ENCODE measurements at regions of chrX and their contacts with region 1.

Region 1: DNA sequence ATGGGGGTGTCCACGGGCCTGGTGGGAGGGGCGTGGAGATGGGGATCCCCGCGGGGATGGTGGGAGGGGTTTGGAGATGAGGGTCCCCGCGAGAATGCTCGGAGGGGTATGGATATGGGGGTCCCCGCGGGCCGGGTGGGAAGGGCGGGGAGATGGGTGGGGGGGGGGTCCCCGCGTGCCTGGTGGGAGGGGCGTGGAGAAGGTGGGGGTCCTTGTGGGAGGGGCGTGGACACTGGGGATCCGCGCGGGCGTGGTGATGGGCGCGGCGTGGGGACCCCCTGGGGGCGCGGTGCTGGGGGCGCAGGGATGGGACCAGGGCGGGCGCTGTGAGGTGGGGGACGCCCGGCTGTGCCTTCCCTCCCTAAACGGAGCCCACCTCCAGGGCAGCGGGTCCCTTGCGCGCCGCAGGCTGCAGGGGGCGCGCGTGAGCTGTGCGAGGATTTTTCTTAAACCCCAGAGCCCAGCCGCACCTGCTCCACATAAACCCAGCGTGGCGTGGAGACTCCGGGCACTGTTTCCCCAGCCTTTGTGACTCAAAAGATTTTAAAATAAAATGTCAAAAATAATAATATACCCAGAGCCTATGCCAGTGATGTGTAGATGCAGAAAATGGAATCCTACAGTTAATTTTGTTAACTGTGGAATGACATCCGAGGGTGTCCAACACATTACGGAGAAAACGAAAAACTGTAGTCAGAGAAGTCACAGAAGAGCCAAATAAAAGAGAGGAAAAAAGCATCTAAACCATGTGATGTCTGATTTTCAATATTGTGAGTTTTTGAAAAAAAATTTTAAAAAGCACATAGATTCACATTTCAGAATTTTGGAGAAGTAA is 1.5 kb upstream of the ASMTL start:
- DNase-seq: peak; percentile 95
- ATAC-seq: peak; percentile 43
- H3K4me3 Mint-ChIP-seq: peak overlapping the region; percentile 47
- H3K27ac Mint-ChIP-seq: peak overlapping the region; percentile 48
- H3K4me1 Mint-ChIP-seq: peaks cover 21% of the 10 kb centered on the region
- H3K27me3 Mint-ChIP-seq: no peaks in the 10 kb centered on the region
- CTCF ChIP-seq: peak; percentile 96

Region 2: DNA sequence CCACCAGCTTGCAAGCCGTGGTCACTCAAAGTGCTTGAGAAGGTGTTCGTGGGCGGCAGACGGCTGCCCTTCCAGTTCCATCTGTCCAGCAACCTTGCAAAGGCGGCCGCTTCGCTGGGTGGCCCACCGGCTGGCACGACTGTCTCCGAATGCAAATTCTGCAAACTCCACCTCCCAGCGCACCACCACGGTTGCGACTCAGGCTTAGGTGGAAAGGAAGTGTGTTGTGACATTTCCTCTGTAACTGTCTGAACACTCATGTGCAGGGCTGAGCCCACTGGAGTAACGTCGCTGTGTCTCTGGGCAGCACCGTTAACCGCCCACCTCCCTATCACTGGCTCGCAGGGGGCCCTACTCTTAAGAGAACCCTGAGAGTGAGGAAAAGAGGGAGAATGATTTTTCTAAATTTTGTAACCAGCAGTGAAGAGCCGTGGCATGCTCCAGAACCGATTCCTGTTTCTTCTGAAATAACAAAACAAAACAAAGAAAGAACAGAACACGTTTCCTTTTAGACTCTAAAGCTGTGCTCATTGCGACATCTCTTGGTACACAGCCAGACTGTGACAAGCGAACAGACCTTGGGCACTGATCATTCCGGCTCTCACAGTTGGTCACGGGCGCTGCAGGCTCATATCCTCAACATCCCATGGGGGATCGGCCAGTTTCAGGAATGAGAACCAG is 83.0 kb after region 1 on chrX and contains the start of gene P2RY8:
- CTCF ChIA-PET with region 1: no interaction called
- POLR2A ChIA-PET with region 1: no interaction called
- intact Hi-C with region 1: loop called (anchors 2 kb)
- DNase-seq: peak; percentile 90
- ATAC-seq: peak; percentile 76
- H3K4me3 Mint-ChIP-seq: peak within 1 kb of the TSS; percentile 96
- H3K27ac Mint-ChIP-seq: peak within 1 kb of the TSS; percentile 99
- H3K4me1 Mint-ChIP-seq: peaks cover 10% of the 10 kb centered on the region
- H3K27me3 Mint-ChIP-seq: no peaks in the 10 kb centered on the region
- CTCF ChIP-seq: no peak
- total RNA-seq, gene P2RY8: 27.5 to 28.3 TPM

Region 3: DNA sequence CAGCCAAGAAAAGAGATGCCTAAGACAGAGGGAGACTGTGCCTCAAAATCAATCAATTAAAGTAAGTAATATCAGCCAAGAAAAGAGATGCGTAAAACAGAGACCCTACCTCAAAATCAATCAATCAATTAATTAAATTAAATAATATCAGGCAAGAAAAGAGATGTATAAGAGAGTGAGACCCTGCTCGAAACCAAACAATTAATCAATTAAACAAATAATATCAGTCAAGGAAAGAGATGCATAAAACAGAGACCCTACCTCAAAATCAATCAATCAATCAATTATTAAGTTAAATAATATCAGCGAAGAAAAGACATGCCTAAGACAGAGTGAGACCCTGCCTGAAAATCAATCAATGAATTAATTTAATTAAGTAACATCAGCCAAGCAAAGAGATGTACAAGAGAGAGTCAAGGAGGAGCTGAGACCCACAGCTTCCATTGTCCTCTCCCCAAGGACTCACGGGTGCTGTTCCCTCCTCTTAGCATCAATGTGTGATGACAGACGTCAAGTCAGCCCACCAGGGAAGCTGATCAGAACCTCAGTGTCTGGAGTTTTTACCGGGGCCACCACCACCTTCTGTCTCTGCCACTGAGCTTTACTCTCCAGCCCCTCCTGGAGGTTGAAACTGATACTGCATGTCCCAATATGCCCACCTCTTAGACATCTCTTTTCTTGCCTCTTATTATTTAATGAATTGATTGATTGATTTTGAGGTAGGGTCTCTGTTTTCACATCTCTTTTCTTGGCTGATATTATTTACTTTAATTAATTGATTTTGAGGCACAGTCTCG is 126.8 kb after region 1 on chrX:
- CTCF ChIA-PET with region 1: no interaction called
- POLR2A ChIA-PET with region 1: no interaction called
- intact Hi-C with region 1: loop called (anchors 5 kb)
- DNase-seq: peak; percentile 92
- ATAC-seq: peak; percentile 93
- H3K4me3 Mint-ChIP-seq: no peak overlapping the region
- H3K27ac Mint-ChIP-seq: no peak overlapping the region
- H3K4me1 Mint-ChIP-seq: peaks cover 16% of the 10 kb centered on the region
- H3K27me3 Mint-ChIP-seq: no peaks in the 10 kb centered on the region
- CTCF ChIP-seq: peak; percentile 92

Region 4: GRCh38 chrX:1657367-1658070 is 203.4 kb after region 1 on chrX:
- CTCF ChIA-PET with region 1: no interaction called
- POLR2A ChIA-PET with region 1: no interaction called
- intact Hi-C with region 1: loop called (anchors 5 kb)
- DNase-seq: peak; percentile 84
- ATAC-seq: peak; percentile 51
- H3K4me3 Mint-ChIP-seq: peak overlapping the region; percentile 100
- H3K27ac Mint-ChIP-seq: peak overlapping the region; percentile 99
- H3K4me1 Mint-ChIP-seq: peaks cover 28% of the 10 kb centered on the region
- H3K27me3 Mint-ChIP-seq: no peaks in the 10 kb centered on the region
- CTCF ChIP-seq: no peak

Region 5: GRCh38 chrX:2188330-2188792 is 734.2 kb after region 1 on chrX:
- CTCF ChIA-PET with region 1: no interaction called
- POLR2A ChIA-PET with region 1: no interaction called
- intact Hi-C with region 1: loop called (anchors 10 kb)
- DNase-seq: no peak
- ATAC-seq: no peak
- H3K4me3 Mint-ChIP-seq: no peak overlapping the region
- H3K27ac Mint-ChIP-seq: no peak overlapping the region
- H3K4me1 Mint-ChIP-seq: no peaks in the 10 kb centered on the region
- H3K27me3 Mint-ChIP-seq: no peaks in the 10 kb centered on the region
- CTCF ChIP-seq: no peak

Measured in activated CD8-positive, alpha-beta T cell treated with anti-CD3 and anti-CD28 coated beads for 36 hours (primary cell).